ENCODE measurements at regions of chr5 and their contacts with region 1.

Region 1: GRCh38 chr5:33309068-33309467 is 131.7 kb upstream of the TARS1 start:
- DNase-seq: no peak
- H3K4me3 ChIP-seq: no peak overlapping the region
- H3K27ac ChIP-seq: peak overlapping the region in 3 of 4 donors; percentile 68 to 71 (median 69)
- H3K4me1 ChIP-seq: peaks cover 0 to 63% (median 44%) of the 10 kb centered on the region in 4 donors
- H3K27me3 ChIP-seq: no peaks in the 10 kb centered on the region
- CTCF ChIP-seq: no peak
- EP300 ChIP-seq: no peak
- POLR2A ChIP-seq: no peak

Region 2: GRCh38 chr5:33369485-33370472 is 60.7 kb after region 1 on chr5:
- intact Hi-C with region 1: loop called (anchors 5 kb)
- DNase-seq: peak; percentile 71
- H3K4me3 ChIP-seq: no peak overlapping the region
- H3K27ac ChIP-seq: peak overlapping the region in 3 of 4 donors; percentile 70 to 82 (median 72)
- H3K4me1 ChIP-seq: peaks cover 0 to 24% (median 12%) of the 10 kb centered on the region in 4 donors
- H3K27me3 ChIP-seq: no peaks in the 10 kb centered on the region
- CTCF ChIP-seq: no peak
- EP300 ChIP-seq: peak; percentile 52 to 87 (median 62)
- POLR2A ChIP-seq: no peak

Region 3: DNA sequence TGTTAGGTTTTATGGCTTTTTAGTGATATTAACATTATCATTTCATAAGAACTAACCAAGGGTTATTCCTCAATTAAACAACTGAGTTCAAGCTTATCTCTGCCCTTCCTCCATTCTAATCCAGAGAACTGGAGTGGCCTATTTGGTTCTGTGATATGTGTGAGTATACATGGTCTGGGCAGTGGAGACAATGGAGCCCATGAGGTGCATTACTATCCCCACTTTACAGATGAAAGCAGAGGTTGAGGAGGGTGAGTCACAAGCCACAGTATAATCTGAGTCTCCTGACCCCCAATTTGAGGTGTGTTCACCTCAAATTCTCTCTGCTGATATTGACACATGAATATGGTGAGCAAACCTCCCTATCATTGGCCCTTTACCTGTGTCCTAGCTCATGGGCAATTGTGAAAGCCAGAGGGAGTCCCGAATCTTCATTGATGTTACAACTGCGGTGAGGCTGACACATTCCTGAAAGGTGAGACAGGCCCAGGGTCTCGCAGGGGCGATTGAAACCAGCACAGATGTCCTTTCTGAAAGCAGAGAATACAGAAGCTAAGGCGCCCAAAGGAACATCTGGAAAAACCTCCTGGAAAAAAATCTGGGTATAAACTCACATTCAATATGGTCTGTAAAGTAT is 348.9 kb after region 1 on chr5:
- intact Hi-C with region 1: no loop called
- DNase-seq: no peak
- H3K4me3 ChIP-seq: no peak overlapping the region
- H3K27ac ChIP-seq: no peak overlapping the region
- H3K4me1 ChIP-seq: no peaks in the 10 kb centered on the region
- H3K27me3 ChIP-seq: no peaks in the 10 kb centered on the region
- CTCF ChIP-seq: no peak
- EP300 ChIP-seq: no peak
- POLR2A ChIP-seq: no peak

Measured in sigmoid colon (tissue), 7 donors.